Right cardiac atrium (tissue), 5 donors: ENCODE measurements at regions of chr12 and their contacts with region 1.

Region 1: GRCh38 chr12:64419696-64420095 is 15.5 kb downstream of the XPOT start:
- DNase-seq: no peak
- ATAC-seq: no peak
- H3K4me3 ChIP-seq: no peak overlapping the region
- H3K27ac ChIP-seq: no peak overlapping the region
- H3K4me1 ChIP-seq: no peaks in the 10 kb centered on the region
- H3K27me3 ChIP-seq: no peaks in the 10 kb centered on the region

Region 2: DNA sequence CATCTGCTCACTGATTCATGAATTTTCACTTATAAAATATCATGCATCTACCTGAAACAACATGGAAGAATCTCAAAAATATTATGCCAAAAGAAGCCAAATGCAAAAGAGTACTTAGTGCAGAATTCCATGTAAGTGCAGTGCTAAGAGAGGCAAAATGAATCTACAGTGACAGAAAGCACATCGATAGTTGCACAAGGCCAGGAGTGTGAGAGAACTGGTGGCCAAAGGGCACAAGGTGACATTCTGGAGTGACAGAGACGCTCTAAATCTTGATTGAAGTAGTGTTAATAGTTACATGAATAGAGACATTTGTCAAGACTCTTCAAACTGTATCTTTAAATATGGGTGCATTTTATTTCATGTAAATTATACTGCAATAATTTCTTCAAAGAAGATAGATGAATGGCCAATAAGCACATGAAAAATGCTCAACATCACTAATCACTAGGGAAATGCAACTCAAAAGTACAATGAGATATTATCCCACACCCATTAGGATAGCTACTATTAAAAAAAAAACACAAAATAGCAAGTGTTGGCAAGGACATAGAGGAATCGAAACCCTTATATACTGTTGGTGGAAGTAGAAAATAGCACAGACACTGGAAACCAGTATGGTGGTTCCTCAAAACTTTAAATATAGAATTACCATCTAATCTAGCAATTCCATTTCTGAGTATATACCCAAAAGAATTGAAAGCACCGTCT is 125.9 kb before region 1 on chr12:
- intact Hi-C with region 1: no loop called
- DNase-seq: no peak
- ATAC-seq: no peak
- H3K4me3 ChIP-seq: no peak overlapping the region
- H3K27ac ChIP-seq: no peak overlapping the region
- H3K4me1 ChIP-seq: no peaks in the 10 kb centered on the region
- H3K27me3 ChIP-seq: no peaks in the 10 kb centered on the region

Region 3: DNA sequence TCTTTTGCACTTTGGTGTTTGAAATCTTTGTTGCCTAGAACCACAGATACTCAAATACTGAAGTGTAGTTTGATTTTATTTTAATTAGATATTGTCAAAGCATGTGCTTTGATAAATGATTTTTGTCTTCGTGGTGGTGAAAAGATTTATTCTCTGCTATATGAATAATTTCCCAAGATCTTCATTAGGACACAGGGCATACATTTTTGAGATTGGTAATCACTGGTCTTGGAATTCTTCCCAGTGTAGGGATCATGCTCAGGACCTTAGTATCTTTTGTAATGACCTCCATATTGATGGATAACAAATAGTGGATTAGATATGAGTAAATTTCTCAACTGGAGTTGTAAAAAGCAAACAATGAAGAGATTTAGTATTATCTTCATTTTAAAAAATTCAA is 60.5 kb after region 1 on chr12:
- intact Hi-C with region 1: loop called in 1 of 4 experiments (anchors 10 kb)
- DNase-seq: no peak
- ATAC-seq: no peak
- H3K4me3 ChIP-seq: no peak overlapping the region
- H3K27ac ChIP-seq: no peak overlapping the region
- H3K4me1 ChIP-seq: no peaks in the 10 kb centered on the region
- H3K27me3 ChIP-seq: no peaks in the 10 kb centered on the region

Region 4: DNA sequence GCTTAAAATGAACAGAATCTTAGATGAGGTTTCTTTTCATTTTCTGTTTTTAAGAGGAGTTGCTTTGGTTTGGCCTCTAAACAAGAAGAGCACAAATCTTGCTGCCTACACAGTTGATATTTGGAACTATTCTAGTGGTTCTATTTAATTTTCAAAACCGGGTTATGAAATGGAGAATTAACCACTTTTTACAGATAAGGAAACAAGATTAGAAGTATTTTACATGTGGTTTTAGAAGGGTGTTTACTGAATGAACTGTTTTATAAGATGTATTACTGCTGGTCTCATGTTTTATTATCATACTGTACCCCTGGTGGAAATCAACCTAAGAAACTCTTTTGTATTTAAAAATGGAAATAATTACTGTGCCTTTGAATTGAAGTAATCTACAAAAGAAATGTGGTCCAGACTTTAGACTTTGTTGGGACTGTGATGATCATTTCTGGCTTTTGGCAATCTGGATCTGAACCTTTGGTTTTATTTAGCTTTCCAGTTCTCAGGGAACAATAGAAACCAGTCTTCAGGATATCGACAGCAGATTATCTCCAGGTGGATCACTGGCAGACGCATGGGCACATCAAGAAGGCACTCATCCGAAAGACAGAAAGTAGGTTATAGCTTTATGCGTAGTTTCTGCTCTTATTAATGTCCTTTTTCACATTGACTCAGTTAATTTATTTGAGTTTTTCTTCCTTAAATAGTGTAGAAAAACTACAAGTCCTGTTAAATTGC is 75.5 kb after region 1 on chr12:
- intact Hi-C with region 1: loop called in 1 of 4 experiments (anchors 10 kb)
- DNase-seq: no peak
- ATAC-seq: no peak
- H3K4me3 ChIP-seq: no peak overlapping the region
- H3K27ac ChIP-seq: no peak overlapping the region
- H3K4me1 ChIP-seq: no peaks in the 10 kb centered on the region
- H3K27me3 ChIP-seq: no peaks in the 10 kb centered on the region